ENCODE measurements at regions of chr20 and their contacts with region 1.

Region 1: GRCh38 chr20:31698803-31699718 is 23.6 kb downstream of the BCL2L1 start:
- DNase-seq: peak; percentile 73
- H3K4me3 Mint-ChIP-seq: no peak overlapping the region
- H3K27ac Mint-ChIP-seq: peak overlapping the region; percentile 91
- H3K4me1 Mint-ChIP-seq: peaks cover 76% of the 10 kb centered on the region
- H3K27me3 Mint-ChIP-seq: no peaks in the 10 kb centered on the region

Region 2: GRCh38 chr20:31580706-31581105 is 118.4 kb before region 1 on chr20:
- CTCF ChIA-PET with region 1: no interaction called
- intact Hi-C with region 1: no loop called
- DNase-seq: no peak
- H3K4me3 Mint-ChIP-seq: no peak overlapping the region
- H3K27ac Mint-ChIP-seq: no peak overlapping the region
- H3K4me1 Mint-ChIP-seq: peaks cover 5% of the 10 kb centered on the region
- H3K27me3 Mint-ChIP-seq: peaks cover 4% of the 10 kb centered on the region

Region 3: DNA sequence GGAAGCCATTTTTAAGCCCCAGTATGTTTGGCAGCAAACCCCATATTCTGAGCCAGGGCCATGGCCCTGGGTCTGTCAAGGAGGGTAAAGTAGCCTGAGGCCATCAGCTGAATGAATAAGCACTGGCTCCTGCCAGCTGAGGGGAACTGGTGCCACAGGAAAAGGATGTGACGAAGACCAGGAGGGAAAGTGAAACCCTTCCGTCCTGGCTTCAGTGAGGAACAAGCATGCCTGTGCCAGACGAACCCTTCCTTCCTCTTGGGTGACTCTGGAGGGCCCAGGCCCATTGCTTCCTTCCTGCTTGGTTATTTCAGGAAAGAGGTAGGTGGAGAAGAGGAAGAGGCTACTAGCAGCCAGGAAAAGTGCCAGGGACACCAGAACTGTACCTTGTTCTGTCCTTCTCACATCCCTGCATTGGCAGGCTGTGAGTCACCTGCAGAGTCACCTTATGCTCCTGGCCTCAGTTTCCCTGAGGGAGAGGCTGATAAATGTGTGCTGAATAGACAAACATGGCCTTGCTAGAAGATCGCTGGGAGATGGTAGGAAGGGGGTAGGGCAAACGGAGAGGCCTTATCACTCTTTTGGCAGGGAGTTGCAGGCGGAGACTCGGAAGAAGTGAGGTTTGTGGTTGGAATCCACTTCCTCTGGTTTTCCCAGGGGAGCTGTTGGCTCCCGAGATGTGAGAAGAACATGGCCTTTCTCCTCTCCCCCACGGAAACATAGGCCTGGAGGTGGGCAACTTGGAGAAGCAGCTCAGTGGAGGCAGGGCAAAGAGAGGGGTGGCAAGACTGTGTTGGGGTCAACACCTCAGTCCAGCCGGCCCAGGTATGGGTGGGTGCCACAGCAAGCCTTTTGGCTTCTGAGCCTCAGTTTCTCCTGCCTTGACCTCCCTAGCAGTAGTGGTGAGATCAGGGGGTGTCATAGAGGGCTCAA is 23.9 kb before region 1 on chr20:
- CTCF ChIA-PET with region 1: interaction called, 4 read pairs
- intact Hi-C with region 1: loop called (anchors 1 kb)
- DNase-seq: peak; percentile 86
- H3K4me3 Mint-ChIP-seq: peak overlapping the region; percentile 84
- H3K27ac Mint-ChIP-seq: peak overlapping the region; percentile 97
- H3K4me1 Mint-ChIP-seq: peaks cover 79% of the 10 kb centered on the region
- H3K27me3 Mint-ChIP-seq: no peaks in the 10 kb centered on the region

Region 4: DNA sequence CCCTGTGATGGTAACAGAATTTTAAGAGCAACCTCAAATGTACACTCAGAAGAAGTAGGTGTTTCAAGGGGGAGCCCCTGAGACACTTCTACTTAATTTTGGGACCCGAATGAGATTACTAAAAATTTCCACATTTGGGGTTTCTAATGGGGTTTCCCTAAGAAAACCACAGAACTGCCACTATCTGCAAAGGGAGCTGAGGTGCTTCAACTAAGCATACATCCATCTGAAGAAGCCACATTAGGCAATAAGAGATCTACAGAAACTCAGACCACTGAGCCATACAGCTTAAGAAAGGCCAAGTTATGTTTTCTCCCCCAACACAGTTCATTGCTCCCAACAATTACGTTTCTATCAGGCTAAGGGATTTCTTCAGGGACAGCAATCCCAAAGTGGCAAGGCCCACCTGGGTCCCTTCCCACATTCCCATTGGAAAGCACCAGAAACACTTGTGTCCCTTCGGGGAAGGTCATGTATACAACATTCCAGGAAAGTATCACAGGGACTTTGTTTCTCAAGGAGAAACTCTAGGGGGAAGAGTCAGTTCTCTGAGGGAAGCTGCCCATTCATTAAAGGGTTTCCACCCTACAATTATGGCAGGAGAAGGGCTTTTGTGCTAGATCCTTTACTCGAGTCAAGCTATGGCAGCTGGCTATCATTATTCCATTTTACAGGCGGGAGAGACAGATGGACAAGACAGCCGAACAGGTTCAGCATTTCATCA is 18.6 kb after region 1 on chr20:
- CTCF ChIA-PET with region 1: interaction called, 4 read pairs
- intact Hi-C with region 1: loop called (anchors 1 kb)
- DNase-seq: peak; percentile 42
- H3K4me3 Mint-ChIP-seq: peak overlapping the region; percentile 95
- H3K27ac Mint-ChIP-seq: peak overlapping the region; percentile 99
- H3K4me1 Mint-ChIP-seq: peaks cover 53% of the 10 kb centered on the region
- H3K27me3 Mint-ChIP-seq: no peaks in the 10 kb centered on the region

Measured in activated naive CD4-positive, alpha-beta T cell treated with anti-CD3 and anti-CD28 coated beads for 36 hours (primary cell).